ENCODE measurements at regions of chr19 and their contacts with region 1.

Region 1: DNA sequence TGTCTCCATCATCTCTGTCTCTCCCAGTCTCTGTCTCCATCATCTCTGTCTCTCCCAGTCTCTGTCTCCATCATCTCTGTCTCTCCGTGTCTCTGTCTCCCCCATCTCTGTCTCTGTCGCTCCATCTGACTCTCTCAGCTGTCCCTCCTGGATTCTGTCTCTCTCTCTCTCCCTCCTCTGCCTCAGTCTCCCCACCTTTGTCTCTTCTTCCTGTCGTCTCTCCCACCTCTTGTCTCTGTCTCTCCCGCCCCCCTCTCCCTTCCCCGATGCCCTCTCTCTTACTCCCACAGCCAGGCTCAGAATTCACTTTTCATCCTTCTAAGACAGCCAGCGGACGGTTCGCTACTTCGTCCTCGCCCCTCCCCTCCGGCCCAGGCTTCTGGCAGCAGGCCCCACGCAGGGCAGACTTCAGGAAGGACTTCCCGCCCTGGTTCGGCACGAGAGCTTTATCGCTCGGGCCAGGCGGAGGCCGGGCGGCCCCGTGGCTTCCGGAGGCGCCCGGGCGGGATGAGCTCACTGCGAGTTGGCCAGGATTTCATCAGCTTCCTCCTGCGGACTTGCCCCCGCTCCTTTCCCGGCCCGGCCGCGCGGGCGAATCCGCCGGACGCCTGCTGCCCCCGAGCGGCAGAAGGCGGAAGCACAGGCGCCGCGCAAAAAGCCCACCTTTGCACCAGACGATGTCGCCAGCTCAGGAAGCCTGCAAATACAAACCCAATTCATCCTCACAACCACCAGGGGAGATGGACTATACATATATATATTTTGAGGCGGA is 12.4 kb upstream of the CCDC9 start:
- DNase-seq: peak; percentile 92
- ATAC-seq: peak; percentile 95

Region 2: DNA sequence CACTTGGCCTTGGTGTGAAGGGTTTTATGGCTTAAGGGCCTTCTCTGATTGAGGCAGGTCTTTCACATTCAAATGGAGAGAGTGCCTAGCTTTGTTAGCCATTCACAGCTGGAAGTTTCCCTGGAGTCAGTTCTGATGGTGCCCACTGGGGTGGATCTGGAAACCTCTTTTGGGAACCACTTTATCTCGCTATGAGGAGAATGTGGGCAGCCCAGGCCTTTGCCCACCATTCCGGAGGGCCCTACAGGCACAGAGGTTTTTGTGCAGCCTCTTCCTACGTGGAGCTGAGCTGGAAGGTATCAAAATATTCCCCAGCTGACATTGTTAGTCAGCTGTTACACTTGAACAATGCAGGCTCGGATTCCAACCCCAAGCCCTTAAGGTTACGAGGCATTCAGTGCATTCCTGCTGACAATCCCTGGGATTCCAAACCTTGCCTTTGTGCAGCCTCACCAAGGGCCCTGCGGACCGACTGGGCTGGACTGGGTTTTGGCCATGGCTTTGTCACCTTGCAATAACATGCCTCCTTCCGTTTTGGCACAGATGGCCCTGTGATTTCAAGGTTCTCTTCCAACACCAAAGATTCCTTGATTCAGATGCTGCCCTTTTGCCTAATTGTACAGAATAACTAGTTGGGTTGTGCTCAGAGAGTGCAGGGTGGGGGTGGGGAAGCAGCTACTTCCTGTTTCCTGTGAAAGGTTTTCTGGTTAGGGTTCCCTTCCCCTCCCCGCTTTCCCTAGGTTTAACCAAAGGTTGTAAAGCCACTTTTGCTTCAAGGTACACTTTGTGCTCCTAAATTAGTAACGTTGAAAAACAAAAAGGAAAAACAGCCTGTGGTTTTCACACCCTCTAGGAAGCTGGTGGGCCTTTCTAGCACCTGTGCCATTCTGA is 86.3 kb before region 1 on chr19:
- intact Hi-C with region 1: loop called (anchors 5 kb)
- DNase-seq: no peak
- ATAC-seq: peak; percentile 65

Region 3: DNA sequence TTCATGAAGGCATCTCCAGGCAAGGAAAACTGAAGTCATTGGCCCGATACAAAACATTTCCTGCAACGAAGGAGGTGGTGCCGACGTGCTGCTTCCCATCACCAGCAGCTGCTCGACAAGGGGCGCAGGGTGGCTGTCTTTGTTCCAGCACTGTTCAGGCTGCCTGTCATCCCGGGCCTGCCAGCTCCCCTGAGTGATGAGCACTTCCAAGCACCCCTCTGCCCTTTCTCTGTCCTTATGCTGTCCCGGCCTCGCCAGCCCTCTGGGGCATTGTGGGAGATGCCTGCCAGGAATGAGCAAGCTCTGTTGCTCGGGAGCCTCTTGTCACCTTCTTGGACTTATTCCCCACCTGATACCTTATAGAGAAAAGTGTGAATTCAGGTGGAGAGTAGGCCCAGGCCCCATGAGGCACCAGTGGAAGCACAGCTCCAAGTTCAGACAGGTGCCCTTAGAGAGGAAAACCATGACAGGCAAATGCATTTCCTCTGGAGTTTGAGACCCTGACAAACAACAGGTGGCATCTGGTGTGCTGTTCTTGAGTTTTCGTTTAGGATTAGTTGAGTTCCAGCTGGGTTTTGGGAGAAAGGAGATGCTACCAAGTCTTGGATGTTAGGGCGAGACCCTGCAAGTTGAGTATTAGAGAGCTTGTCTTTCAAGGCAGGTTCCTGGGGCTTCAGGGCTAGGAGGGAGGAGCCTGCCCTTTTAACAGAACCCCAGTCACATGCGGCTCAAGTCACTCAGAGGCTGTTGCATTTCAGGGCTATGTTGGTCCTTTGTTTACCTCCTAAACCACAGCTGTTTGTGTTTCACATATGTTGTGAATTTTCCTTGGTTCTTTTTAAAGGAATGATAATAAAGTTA is 34.4 kb before region 1 on chr19:
- intact Hi-C with region 1: loop called (anchors 5 kb)
- DNase-seq: no peak
- ATAC-seq: no peak